Sciatic nerve (tissue), 2 donors: ENCODE measurements at regions of chr3 and their contacts with region 1.

Region 1: DNA sequence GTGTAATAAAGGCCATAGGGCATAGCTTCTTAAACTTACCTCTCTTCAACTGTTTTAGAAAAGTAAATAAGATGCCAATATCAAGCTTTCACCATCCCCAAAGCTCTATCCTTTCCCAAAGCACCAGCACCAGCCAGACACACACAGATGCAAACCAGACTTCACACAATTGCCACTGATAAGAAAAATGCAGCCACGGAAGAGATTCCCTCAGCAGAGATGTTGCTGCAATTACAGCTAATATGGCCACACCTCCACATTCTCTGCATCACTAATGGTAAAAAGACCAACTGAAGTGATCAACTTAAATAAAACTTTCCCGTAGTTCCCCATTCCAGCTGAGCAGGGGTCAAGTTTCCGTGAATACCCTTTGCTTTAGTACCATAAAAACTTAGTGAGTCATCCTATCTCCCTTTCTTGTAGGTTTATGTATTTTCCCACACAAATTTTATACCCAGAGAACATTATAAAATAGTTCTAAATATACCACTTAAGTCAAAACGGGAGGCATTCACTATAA is 64.4 kb downstream of the SLC9A9 start:
- DNase-seq: no peak
- ATAC-seq: no peak

Region 2: DNA sequence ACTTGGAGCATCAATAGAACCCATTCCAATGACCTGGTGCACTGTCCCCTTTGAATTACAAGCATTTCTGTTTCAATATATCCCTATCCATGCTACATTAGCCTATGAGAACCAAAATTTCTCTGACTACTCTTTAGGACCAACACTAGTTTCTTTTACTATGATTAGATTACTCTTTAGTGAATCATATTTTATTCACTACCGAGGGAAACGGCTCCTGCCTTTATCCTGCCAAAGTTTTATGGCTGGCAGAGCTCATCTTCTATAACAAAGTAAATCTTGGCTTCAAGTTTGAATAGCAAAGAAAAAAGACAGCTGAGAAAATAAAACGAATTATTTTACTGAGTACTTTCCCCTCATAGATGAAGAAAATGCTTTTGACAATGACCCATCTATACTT is 56.5 kb before region 1 on chr3:
- intact Hi-C with region 1: loop called (anchors 2 kb)
- DNase-seq: no peak
- ATAC-seq: no peak